ENCODE measurements at regions of chr12 and their contacts with region 1.

Region 1: DNA sequence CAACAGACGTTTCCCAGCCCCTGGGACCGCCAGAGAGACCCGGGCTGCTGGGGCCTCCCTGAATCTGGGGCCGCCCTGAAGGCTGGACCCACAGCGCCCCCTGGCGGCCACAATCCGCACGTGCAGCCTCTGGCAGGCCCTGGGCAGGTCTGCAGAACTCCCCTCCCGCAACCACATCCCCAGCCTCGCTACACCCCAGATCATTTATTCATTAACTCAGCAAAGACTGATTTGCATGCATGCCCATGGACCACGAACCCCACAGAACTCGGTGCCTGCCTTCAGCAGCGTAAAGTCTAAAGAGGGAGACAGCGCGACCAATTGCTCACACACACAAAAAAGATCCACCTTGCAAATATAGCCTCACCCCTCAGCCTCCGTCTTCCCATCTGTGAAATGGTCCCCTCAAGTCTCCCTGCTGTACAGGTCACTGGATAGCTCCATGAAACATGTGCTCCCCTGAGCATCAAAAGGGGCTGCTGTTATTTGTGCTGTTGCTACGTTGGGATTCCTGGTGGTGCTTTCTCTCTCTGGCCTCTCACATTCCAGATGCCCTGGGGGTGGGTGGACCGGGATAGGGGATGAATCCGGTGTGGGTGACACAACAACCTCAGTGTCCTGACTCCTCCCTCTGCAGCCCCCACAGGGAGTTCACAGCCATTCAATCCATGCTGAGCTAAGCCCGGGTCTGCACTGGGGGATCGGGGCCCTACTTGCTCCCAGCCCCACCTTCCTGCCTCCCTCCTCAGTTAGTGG is 96.4 kb downstream of the SCARB1 start:
- DNase-seq: no peak
- H3K4me3 ChIP-seq: no peak overlapping the region
- CTCF ChIP-seq: peak; percentile 98

Region 2: GRCh38 chr12:124053851-124054250 is 713.4 kb before region 1 on chr12:
- CTCF ChIA-PET with region 1: interaction called, 14 read pairs
- POLR2A ChIA-PET with region 1: no interaction called
- DNase-seq: no peak
- H3K4me3 ChIP-seq: no peak overlapping the region
- CTCF ChIP-seq: peak; percentile 71

Region 3: DNA sequence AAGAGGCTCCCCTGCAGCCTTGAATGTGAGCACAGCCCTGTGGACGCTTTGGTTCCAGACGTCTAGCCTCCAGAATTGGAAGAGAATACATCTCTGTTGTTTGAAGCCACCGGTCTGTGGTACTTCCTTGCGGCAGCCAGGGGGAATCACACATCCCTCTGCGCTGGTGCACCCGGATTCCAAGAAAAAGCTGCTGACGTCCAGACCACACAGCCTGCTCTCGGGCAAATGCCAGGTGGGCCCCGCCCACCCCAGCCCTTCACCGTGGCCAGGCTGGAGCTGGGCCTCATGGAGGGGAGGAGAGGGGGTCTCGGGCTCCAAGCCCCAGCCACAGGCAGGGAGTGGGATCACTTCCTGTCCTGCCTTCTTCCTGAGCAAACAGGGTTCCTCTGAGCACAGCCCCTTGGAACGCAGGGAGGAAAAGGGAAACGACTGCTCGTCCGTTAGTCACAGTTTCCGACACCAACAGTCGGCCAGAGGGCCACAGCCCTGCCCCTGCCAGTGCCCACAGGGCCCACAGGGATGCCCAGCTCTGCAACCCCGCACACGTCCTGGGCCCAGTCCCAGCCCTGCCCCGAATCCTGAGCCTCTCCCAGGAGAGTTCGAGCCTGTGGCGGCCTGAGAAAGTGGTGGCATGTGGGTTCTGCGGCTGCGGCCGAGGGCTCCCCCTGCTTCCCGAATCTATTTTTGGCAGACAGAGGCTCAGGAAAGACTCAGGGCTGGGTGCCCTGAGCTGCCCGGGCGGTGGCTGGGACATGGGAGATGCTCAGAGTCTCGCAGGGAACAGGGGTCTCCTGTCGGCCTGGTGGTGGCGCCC is 387.1 kb before region 1 on chr12:
- CTCF ChIA-PET with region 1: interaction called, 83 read pairs
- POLR2A ChIA-PET with region 1: interaction called, 7 read pairs
- DNase-seq: no peak
- H3K4me3 ChIP-seq: no peak overlapping the region
- CTCF ChIP-seq: peak; percentile 64

Region 4: GRCh38 chr12:124512667-124513296 is 254.5 kb before region 1 on chr12:
- CTCF ChIA-PET with region 1: interaction called, 22 read pairs
- POLR2A ChIA-PET with region 1: interaction called, 12 read pairs
- DNase-seq: peak; percentile 65
- H3K4me3 ChIP-seq: no peak overlapping the region; the same call in 1 of the 2 replicates
- CTCF ChIP-seq: no peak

Region 5: GRCh38 chr12:124551268-124552144 is 215.7 kb before region 1 on chr12:
- CTCF ChIA-PET with region 1: interaction called, 24 read pairs
- POLR2A ChIA-PET with region 1: no interaction called
- DNase-seq: no peak
- H3K4me3 ChIP-seq: no peak overlapping the region
- CTCF ChIP-seq: no peak

Region 6: GRCh38 chr12:124745891-124746570 is 21.2 kb before region 1 on chr12:
- CTCF ChIA-PET with region 1: interaction called, 18 read pairs
- POLR2A ChIA-PET with region 1: no interaction called
- DNase-seq: no peak
- H3K4me3 ChIP-seq: no peak overlapping the region
- CTCF ChIP-seq: no peak

Region 7: GRCh38 chr12:124906606-124907261 is 139.5 kb after region 1 on chr12:
- CTCF ChIA-PET with region 1: interaction called, 15 read pairs
- POLR2A ChIA-PET with region 1: interaction called, 3 read pairs
- DNase-seq: no peak
- H3K4me3 ChIP-seq: no peak overlapping the region
- CTCF ChIP-seq: peak; percentile 78

Measured in AG04449 (cell line).